Activated B cell treated with CpG ODN at 0.5 μM for 24 hours (primary cell): ENCODE measurements at regions of chr1 and their contacts with region 1.

Region 1: GRCh38 chr1:116570358-116571200 is at the start of gene CD58:
- DNase-seq: peak; percentile 84
- ATAC-seq: peak; percentile 86
- H3K4me3 Mint-ChIP-seq: peak within 1 kb of the TSS; percentile 99
- H3K27ac Mint-ChIP-seq: peak within 1 kb of the TSS; percentile 95
- H3K4me1 Mint-ChIP-seq: peaks cover 80% of the 10 kb centered on the region
- H3K27me3 Mint-ChIP-seq: no peaks in the 10 kb centered on the region
- CTCF ChIP-seq: no peak
- total RNA-seq, gene CD58: 146 and 160 TPM in 2 replicates

Region 2: GRCh38 chr1:116139592-116140134 is 430.9 kb before region 1 on chr1:
- CTCF ChIA-PET with region 1: interaction called, 11 read pairs
- POLR2A ChIA-PET with region 1: no interaction called
- intact Hi-C with region 1: loop called (anchors 1 kb)
- DNase-seq: no peak
- ATAC-seq: no peak
- H3K4me3 Mint-ChIP-seq: no peak overlapping the region
- H3K27ac Mint-ChIP-seq: no peak overlapping the region
- H3K4me1 Mint-ChIP-seq: peaks cover 5% of the 10 kb centered on the region
- H3K27me3 Mint-ChIP-seq: peaks cover 5% of the 10 kb centered on the region
- CTCF ChIP-seq: no peak

Region 3: DNA sequence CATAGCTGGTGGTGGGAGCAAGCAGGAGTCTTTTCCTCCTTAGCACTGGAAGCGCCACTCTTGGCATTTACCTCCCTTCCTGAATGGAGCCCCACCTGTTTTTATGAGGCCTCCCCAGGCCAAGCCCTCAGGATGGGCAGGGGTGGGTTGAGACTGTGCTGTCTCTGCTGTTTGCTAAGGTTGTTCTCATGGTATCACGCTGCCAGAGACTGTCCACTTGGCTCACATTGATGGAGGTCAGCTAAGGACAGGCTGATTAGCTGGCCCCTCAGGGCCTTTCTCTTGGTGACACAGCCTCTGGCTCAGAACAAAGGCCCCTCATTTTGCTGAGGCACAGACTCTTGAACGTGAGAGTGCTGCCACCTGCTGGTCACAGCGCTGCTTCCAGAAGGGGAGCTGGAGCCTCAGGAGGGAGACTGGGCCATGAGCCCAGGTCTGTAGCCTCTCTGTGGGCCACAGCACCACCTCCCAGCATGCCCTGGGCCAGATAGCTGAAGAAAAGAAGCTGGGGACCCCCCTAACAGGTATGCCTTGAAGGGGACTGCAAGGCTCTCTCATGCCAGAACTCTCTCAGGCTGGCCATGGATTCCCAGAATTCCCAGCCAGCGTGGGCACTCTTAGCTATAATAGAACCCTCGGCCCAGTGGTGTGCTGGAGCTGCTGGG is 85.4 kb before region 1 on chr1:
- CTCF ChIA-PET with region 1: interaction called, 13 read pairs
- POLR2A ChIA-PET with region 1: interaction called, 4 read pairs
- intact Hi-C with region 1: no loop called
- DNase-seq: peak; percentile 71
- ATAC-seq: peak; percentile 92
- H3K4me3 Mint-ChIP-seq: no peak overlapping the region
- H3K27ac Mint-ChIP-seq: no peak overlapping the region
- H3K4me1 Mint-ChIP-seq: peaks cover 12% of the 10 kb centered on the region
- H3K27me3 Mint-ChIP-seq: no peaks in the 10 kb centered on the region
- CTCF ChIP-seq: peak; percentile 31

Region 4: DNA sequence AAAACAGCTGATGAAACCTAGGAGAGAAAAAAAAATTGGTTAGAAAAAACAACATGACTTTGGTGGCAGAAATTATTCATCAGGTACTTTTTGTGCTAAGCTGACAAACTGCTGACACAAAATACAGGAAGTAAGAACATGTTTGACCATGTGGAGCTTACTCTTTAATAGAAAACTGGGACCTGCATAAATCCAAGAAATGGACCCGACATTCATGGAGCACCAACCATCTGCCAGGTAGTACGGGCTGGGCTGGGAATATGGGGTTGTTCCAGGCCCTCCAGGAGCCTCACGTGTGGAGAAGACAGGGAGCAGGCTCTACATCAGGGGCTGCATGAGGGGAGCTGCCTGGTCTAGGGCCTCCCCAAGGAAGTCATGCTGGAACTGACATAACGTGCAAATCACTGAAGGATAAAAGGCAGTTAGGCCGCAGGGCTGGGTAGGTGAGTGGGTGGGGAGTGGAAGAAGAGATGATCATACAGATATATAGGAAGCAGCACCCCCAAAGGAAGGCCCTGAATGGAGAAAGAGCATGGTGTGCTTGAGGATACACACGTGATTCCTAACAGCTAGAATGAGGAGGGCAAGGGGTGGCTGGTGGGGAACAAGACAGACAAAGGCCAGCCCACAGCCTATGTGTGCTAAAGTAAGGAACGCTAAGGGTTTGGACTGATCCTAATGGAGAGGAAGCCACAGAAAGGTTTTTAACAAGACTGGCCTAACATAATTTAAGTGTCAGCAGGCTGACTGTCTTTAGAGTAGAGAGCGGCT is 25.8 kb before region 1 on chr1:
- CTCF ChIA-PET with region 1: interaction called, 6 read pairs
- POLR2A ChIA-PET with region 1: interaction called, 52 read pairs
- intact Hi-C with region 1: loop called (anchors 1 kb)
- DNase-seq: peak; percentile 46
- ATAC-seq: peak; percentile 74
- H3K4me3 Mint-ChIP-seq: peak overlapping the region; percentile 76
- H3K27ac Mint-ChIP-seq: peak overlapping the region; percentile 96
- H3K4me1 Mint-ChIP-seq: peaks cover 81% of the 10 kb centered on the region
- H3K27me3 Mint-ChIP-seq: no peaks in the 10 kb centered on the region
- CTCF ChIP-seq: no peak

Region 5: GRCh38 chr1:116674011-116674531 is 103.5 kb after region 1 on chr1:
- CTCF ChIA-PET with region 1: interaction called, 39 read pairs
- POLR2A ChIA-PET with region 1: interaction called, 3 read pairs
- intact Hi-C with region 1: loop called (anchors 1 kb)
- DNase-seq: no peak
- ATAC-seq: no peak
- H3K4me3 Mint-ChIP-seq: no peak overlapping the region
- H3K27ac Mint-ChIP-seq: no peak overlapping the region
- H3K4me1 Mint-ChIP-seq: peaks cover 3% of the 10 kb centered on the region
- H3K27me3 Mint-ChIP-seq: peaks cover 23% of the 10 kb centered on the region
- CTCF ChIP-seq: no peak

Region 6: GRCh38 chr1:116934586-116935207 is 364.1 kb after region 1 on chr1:
- CTCF ChIA-PET with region 1: no interaction called
- POLR2A ChIA-PET with region 1: no interaction called
- intact Hi-C with region 1: loop called (anchors 10 kb)
- DNase-seq: no peak
- ATAC-seq: no peak
- H3K4me3 Mint-ChIP-seq: no peak overlapping the region
- H3K27ac Mint-ChIP-seq: no peak overlapping the region
- H3K4me1 Mint-ChIP-seq: no peaks in the 10 kb centered on the region
- H3K27me3 Mint-ChIP-seq: peaks cover 7% of the 10 kb centered on the region
- CTCF ChIP-seq: no peak

Region 7: DNA sequence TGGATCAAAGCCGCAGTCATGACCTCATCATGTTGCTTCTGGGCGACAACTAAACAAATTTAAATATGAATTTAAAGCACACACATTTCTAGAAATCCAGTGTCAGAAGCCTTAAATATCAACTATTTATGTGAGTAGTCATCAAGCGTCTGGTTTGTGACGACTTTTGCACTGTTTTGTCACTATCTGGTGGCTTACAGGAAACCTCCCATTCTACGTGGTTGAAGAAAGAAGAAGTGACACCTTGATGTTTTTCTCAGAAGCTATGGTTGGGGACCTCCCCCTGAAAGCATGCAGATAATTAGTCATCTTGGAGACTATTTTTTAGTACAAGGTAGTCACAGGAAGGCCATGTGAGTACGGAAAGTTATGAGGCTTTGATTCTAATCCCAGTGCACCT is 1093.7 kb after region 1 on chr1:
- CTCF ChIA-PET with region 1: no interaction called
- POLR2A ChIA-PET with region 1: no interaction called
- intact Hi-C with region 1: loop called (anchors 5 kb)
- DNase-seq: no peak
- ATAC-seq: peak; percentile 87
- H3K4me3 Mint-ChIP-seq: peak overlapping the region; percentile 44
- H3K27ac Mint-ChIP-seq: peak overlapping the region; percentile 93
- H3K4me1 Mint-ChIP-seq: peaks cover 83% of the 10 kb centered on the region
- H3K27me3 Mint-ChIP-seq: no peaks in the 10 kb centered on the region
- CTCF ChIP-seq: no peak